CD4-positive, alpha-beta T cell (primary cell): ENCODE measurements at regions of chrX and their contacts with region 1.

Region 1: GRCh38 chrX:136689436-136689835 is 41.5 kb downstream of the CD40LG start:
- DNase-seq: peak in 4 of 14 experiments; percentile 38 to 51 (median 42)
- ATAC-seq: peak; percentile 11
- H3K4me3 ChIP-seq: no peak overlapping the region
- H3K4me3 Mint-ChIP-seq: peak overlapping the region; percentile 27
- H3K27ac ChIP-seq: peak overlapping the region; percentile 67 to 75
- H3K27ac Mint-ChIP-seq: peak overlapping the region; percentile 95
- H3K4me1 ChIP-seq: peaks cover 62% of the 10 kb centered on the region
- H3K4me1 Mint-ChIP-seq: peaks cover 78% of the 10 kb centered on the region
- H3K27me3 ChIP-seq: no peaks in the 10 kb centered on the region
- H3K27me3 Mint-ChIP-seq: no peaks in the 10 kb centered on the region
- CTCF ChIP-seq: no peak

Region 2: DNA sequence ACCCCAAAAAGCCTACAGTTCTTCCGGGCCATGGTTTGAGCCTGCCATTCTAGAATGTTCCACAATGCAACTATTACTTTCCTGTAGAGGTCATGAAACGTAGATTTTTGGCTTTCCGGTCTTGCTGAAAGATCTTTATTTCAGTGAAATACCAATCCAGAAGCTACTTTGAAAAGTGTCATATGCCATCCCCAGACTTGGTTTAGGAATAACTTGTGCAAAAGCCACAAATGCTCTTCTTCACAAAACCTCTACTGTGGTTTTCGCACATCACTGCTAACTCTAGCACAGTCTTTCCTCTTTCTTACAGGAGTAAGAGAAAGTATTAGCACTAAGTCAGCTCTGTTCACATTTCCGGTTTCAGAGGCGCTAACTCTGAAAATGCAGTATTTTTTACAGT is 54.2 kb before region 1 on chrX:
- CTCF ChIA-PET with region 1: interaction called, 4 read pairs
- POLR2A ChIA-PET with region 1: interaction called, 11 read pairs
- intact Hi-C with region 1: loop called in 1 of 2 experiments (anchors 10 kb)
- DNase-seq: peak in 4 of 14 experiments; percentile 28 to 76 (median 70)
- ATAC-seq: peak; percentile 80
- H3K4me3 ChIP-seq: peak overlapping the region; percentile 27
- H3K4me3 Mint-ChIP-seq: peak overlapping the region; percentile 58
- H3K27ac ChIP-seq: peak overlapping the region; percentile 39 to 47
- H3K27ac Mint-ChIP-seq: peak overlapping the region; percentile 88
- H3K4me1 ChIP-seq: peaks cover 83% of the 10 kb centered on the region
- H3K4me1 Mint-ChIP-seq: peaks cover 88% of the 10 kb centered on the region
- H3K27me3 ChIP-seq: no peaks in the 10 kb centered on the region
- H3K27me3 Mint-ChIP-seq: no peaks in the 10 kb centered on the region
- CTCF ChIP-seq: no peak

Region 3: DNA sequence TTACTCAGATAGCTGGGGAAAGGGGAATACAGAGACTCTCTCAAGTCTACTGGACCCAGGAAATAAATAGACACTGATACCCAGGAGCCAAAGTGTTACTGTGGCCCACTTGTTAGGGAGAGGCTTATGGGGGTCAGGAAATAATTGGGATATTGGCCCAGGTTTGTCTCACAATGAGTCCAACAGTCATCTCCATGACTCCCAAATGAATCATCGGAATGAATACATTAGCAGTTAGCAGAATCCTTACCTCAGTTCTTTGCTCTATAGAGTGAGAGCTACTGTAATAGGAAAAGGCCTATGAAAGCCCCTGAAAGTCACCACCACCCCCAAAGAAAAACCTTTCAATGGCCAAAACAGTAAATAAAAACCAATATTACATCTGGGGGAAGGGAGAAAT is 133.7 kb after region 1 on chrX:
- CTCF ChIA-PET with region 1: no interaction called
- POLR2A ChIA-PET with region 1: no interaction called
- intact Hi-C with region 1: no loop called
- DNase-seq: no peak
- ATAC-seq: no peak
- H3K4me3 ChIP-seq: no peak overlapping the region
- H3K4me3 Mint-ChIP-seq: no peak overlapping the region
- H3K27ac ChIP-seq: no peak overlapping the region
- H3K27ac Mint-ChIP-seq: no peak overlapping the region
- H3K4me1 ChIP-seq: no peaks in the 10 kb centered on the region
- H3K4me1 Mint-ChIP-seq: no peaks in the 10 kb centered on the region
- H3K27me3 ChIP-seq: no peaks in the 10 kb centered on the region
- H3K27me3 Mint-ChIP-seq: no peaks in the 10 kb centered on the region
- CTCF ChIP-seq: no peak

Region 4: DNA sequence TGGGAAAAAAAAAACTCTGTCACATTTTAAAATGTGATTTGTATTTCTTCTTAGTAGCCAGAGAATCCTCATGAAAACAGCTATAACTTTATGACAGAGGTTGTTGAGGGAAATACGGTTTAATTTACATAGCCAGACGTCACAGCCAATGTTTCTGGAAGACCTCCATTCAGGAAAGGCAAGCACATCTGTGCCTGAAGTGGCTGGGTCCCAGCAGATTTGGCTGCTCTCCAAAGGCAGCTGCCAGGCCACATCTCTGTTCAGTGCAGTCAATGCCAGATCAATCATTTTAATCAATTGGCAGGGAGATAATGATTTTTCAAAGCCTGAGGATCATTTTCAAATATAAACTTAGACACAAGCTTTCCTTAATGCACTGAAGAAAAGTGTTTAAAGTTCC is 790.0 kb after region 1 on chrX:
- CTCF ChIA-PET with region 1: no interaction called
- POLR2A ChIA-PET with region 1: no interaction called
- intact Hi-C with region 1: no loop called
- DNase-seq: no peak
- ATAC-seq: no peak
- H3K4me3 ChIP-seq: no peak overlapping the region
- H3K4me3 Mint-ChIP-seq: no peak overlapping the region
- H3K27ac ChIP-seq: no peak overlapping the region
- H3K27ac Mint-ChIP-seq: no peak overlapping the region
- H3K4me1 ChIP-seq: no peaks in the 10 kb centered on the region
- H3K4me1 Mint-ChIP-seq: no peaks in the 10 kb centered on the region
- H3K27me3 ChIP-seq: no peaks in the 10 kb centered on the region
- H3K27me3 Mint-ChIP-seq: no peaks in the 10 kb centered on the region
- CTCF ChIP-seq: no peak